Ascending aorta (tissue), 2 donors: ENCODE measurements at regions of chr15 and their contacts with region 1.

Region 1: DNA sequence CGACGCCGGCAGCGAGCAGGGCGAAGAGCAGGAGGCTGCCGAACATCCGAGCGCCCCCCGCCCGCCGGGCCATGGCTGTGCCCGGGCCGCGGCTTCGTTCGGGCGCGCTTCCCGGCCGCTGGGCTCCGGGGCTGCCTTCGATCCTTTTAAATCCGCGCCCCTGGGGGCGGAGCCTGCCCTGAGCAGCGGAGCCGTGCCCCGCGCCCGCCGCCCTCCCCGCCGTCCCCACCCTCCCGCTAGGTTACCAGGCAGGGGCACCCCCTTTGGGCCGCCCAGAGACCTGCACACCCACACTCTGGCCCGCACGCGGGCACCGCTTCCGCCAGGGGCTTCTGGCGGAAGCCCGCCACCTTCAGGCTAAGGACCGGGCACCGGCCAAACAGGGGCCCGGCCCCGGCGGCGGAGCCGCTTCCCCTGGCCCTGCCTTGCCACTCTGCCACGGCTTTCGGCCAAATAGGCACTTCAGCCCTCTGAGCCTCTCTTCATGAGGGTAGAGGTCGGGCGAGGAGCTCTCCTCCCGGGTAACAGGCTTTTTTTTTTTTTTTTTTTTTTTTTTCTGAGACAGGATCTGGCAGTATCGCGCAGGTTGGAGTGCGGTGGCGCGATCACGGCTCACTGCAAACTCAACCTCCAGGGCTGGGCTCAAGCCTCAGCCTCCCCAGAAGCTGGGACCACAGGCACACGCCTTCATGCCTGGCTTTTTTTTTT is at the start of gene NMB:
- DNase-seq: peak; percentile 50 to 90
- H3K4me3 ChIP-seq: peak within 1 kb of the TSS; percentile 69 to 75
- H3K27ac ChIP-seq: peak within 1 kb of the TSS; percentile 86 to 91
- H3K4me1 ChIP-seq: peaks cover 2 to 24% of the 10 kb centered on the region in 2 donors
- H3K27me3 ChIP-seq: no peaks in the 10 kb centered on the region
- CTCF ChIP-seq: peak; percentile 76 to 83 (median 81)
- total RNA-seq, gene NMB: 18.8 TPM

Region 2: GRCh38 chr15:84600851-84601838 is 57.1 kb before region 1 on chr15 and contains the start of gene ZSCAN2:
- intact Hi-C with region 1: loop called (anchors 2 kb)
- DNase-seq: peak; percentile 90 to 98
- H3K4me3 ChIP-seq: peak within 1 kb of the TSS; percentile 85 to 91
- H3K27ac ChIP-seq: peak within 1 kb of the TSS; percentile 43 to 72
- H3K4me1 ChIP-seq: peaks cover 0 to 13% of the 10 kb centered on the region in 2 donors
- H3K27me3 ChIP-seq: no peaks in the 10 kb centered on the region
- CTCF ChIP-seq: no peak
- total RNA-seq, gene ZSCAN2: 4.6 TPM

Region 3: DNA sequence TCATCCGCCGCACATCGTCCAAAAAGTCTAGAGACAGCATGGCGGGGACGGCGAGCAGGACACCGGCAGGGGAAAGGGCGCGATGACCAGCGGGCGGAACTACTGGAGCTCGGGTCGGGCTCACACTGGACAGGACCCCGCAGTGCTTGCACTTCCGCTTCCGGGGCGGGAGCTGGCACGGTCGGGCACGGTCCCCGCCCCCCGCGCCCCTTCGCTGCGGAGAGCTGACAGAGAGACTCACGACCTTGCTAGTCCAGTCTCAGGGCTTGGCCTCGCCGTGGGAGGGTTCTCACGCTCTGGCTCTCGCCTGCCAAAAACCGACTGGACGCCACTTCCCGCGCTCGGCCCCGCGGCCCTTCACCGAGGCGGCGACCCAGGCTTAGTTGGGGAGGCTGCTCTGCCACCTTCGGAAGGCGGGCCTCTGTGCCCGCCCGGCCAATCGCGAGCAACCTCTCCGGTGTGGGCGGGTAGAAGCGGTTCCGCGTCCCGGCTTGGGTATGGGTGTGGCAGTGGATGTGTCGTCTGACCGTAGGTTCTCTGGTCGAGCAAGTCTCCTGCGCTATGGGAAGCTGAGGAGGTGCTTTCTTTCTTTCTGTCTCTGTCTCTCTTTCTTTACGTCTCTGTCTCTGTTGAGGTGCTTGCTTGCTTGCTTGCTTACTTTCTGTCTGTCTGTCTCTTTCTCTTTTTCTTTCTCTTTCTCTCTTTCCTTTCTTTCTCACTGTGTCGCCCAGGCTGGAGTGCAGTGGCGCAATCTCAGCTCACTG is 58.0 kb after region 1 on chr15 and contains the start of gene SEC11A:
- intact Hi-C with region 1: loop called (anchors 1 kb)
- DNase-seq: peak; percentile 88 to 98
- H3K4me3 ChIP-seq: peak within 1 kb of the TSS; percentile 70 to 77
- H3K27ac ChIP-seq: peak within 1 kb of the TSS; percentile 88
- H3K4me1 ChIP-seq: peaks cover 3 to 10% of the 10 kb centered on the region in 2 donors
- H3K27me3 ChIP-seq: no peaks in the 10 kb centered on the region
- CTCF ChIP-seq: no peak
- total RNA-seq, gene SEC11A: 31.6 TPM

Region 4: DNA sequence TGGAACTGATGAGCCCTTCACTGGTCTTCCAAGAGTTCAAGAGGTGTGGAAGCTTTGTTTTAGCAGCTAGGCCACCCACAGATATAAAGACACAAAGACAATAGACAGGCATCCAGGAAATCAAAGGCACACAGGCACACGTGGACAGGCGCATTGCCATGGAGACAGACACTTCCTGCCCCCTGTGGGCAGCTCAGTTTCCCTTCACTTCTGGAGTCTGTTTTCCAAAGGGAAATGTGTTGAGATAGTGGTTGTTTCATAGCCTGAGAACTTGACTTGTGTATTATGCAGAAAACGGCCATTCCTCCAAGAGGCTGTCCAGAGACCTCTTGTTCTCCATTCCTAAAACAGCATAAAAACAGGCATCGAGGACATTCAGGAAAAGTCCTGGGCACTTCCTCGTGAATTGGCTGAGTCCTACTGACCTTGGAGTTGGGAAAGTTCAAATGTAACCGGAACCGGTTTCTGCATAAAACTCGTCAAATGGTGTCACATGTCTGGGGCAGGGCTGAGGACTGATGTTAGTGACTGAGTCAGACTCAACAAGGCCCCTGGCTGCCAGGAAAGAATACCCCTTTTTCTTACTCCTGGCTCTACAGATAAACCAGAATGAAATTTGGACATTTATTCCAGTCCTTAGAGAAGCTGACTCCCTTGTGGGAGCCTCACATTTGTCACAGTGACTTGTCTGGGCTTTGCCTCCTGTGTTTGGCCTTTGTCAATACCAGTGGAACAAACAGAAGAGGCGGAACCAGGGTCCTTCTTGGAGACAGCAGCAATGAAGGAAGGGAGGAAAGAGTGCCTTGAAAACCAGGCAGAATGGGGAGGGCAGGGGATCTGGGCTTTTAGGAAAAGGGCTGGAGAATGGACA is 160.3 kb after region 1 on chr15:
- intact Hi-C with region 1: loop called (anchors 2 kb)
- DNase-seq: peak in 1 of 2 donors; percentile 81
- H3K4me3 ChIP-seq: peak overlapping the region; percentile 67 to 77
- H3K27ac ChIP-seq: peak overlapping the region; percentile 98 to 99
- H3K4me1 ChIP-seq: peaks cover 12 to 50% of the 10 kb centered on the region in 2 donors
- H3K27me3 ChIP-seq: no peaks in the 10 kb centered on the region
- CTCF ChIP-seq: no peak

Region 5: GRCh38 chr15:84981054-84981710 is 322.9 kb after region 1 on chr15:
- intact Hi-C with region 1: loop called (anchors 5 kb)
- DNase-seq: peak; percentile 80 to 96
- H3K4me3 ChIP-seq: peak overlapping the region; percentile 94 to 98
- H3K27ac ChIP-seq: peak overlapping the region; percentile 92 to 94
- H3K4me1 ChIP-seq: peaks cover 0 to 6% of the 10 kb centered on the region in 2 donors
- H3K27me3 ChIP-seq: no peaks in the 10 kb centered on the region
- CTCF ChIP-seq: peak; percentile 35 to 69 (median 38)